ENCODE measurements at regions of chr10 and their contacts with region 1.

Region 1: GRCh38 chr10:131981429-131982184 is at the start of gene BNIP3:
- DNase-seq: peak; percentile 95
- total RNA-seq, gene BNIP3: 112 TPM

Region 2: GRCh38 chr10:131900350-131901146 is 81.1 kb before region 1 on chr10 and contains the start of gene PPP2R2D:
- intact Hi-C with region 1: loop called (anchors 5 kb)
- DNase-seq: peak; percentile 97
- total RNA-seq, gene PPP2R2D: 35.3 TPM

Region 3: DNA sequence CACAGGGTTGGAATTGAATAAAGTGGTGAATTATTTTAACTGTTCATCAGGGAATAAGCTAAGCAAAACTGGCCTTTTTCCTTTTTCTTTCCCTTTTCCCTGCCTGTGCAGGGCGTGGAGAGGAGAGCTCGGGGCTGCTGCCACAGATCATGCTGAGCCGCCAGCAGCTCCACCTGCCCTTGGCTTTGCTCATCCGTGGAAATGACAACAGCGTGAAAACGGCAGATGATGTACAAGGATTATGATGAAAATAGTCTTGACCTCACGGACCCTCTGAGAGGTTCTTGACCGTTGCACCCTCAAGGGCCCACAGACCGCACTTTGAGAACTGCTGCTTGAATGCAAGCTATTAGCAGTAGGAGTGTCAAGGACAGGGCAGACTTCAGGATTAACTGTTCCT is 70.2 kb before region 1 on chr10:
- intact Hi-C with region 1: no loop called
- DNase-seq: no peak

Region 4: GRCh38 chr10:132115732-132116131 is 134.1 kb after region 1 on chr10:
- intact Hi-C with region 1: no loop called
- DNase-seq: peak; percentile 72